ENCODE measurements at regions of chr1 and their contacts with region 1.

Region 1: GRCh38 chr1:167542109-167543032 is 11.2 kb downstream of the CREG1 start:
- DNase-seq: no peak
- ATAC-seq: no peak
- H3K4me3 Mint-ChIP-seq: no peak overlapping the region
- H3K27ac Mint-ChIP-seq: no peak overlapping the region
- H3K4me1 Mint-ChIP-seq: peaks cover 12% of the 10 kb centered on the region
- H3K27me3 Mint-ChIP-seq: no peaks in the 10 kb centered on the region
- CTCF ChIP-seq: no peak

Region 2: DNA sequence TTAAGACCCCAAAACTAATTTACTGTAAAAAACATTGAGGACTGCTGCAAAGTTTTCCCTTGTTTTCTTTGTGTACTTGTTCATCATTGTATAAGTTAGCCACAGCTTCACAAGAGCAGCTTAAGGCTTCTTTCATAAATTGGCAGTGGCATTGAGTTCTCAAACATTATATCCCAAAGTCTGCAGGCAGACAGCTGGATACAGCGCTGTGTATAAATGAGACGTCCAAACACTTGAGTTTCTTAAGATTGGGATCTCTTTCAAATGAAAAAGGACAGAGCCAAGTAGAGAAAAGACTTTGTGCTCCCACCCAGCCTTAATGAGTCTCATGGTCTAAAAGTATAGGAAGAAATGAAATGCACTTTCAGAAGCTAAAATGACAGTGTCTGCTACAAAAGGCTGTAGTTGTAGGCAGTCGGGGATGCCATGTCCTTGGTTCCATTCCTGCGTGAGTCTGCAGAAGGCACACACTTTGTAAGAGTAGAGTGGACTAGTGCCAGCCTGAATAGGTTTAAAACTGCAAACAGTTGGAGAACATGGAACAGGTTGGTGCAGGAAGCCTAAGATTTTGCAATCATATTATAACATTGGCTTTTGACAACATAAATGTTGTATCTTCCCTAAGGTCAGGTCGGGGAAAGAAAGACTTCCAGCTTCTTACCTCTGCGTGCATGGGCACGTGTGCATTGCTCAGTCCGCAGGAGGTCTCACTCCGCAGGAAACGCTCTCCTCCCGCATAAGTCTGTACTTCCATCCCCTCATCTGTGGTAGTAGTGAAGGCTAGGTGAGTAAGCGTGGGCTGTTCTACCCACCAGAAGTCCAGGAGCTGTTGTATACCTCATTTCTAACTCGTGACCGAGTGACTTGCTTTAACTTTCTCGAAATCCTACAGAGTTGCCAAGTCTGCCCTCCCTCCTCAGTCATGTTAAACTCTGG is 118.4 kb before region 1 on chr1:
- CTCF ChIA-PET with region 1: interaction called, 10 read pairs
- POLR2A ChIA-PET with region 1: no interaction called
- DNase-seq: no peak
- ATAC-seq: peak; percentile 14; the same call in 1 of the 2 replicates
- H3K4me3 Mint-ChIP-seq: no peak overlapping the region
- H3K27ac Mint-ChIP-seq: no peak overlapping the region; the same call in 1 of the 2 replicates
- H3K4me1 Mint-ChIP-seq: peaks cover 66% of the 10 kb centered on the region
- H3K27me3 Mint-ChIP-seq: no peaks in the 10 kb centered on the region; the same call in 1 of the 2 replicates
- CTCF ChIP-seq: no peak

Region 3: GRCh38 chr1:167454894-167455785 is 87.2 kb before region 1 on chr1:
- CTCF ChIA-PET with region 1: interaction called, 31 read pairs
- POLR2A ChIA-PET with region 1: no interaction called
- DNase-seq: peak; percentile 57
- ATAC-seq: peak; percentile 54
- H3K4me3 Mint-ChIP-seq: peak overlapping the region; percentile 64
- H3K27ac Mint-ChIP-seq: no peak overlapping the region
- H3K4me1 Mint-ChIP-seq: peaks cover 24% of the 10 kb centered on the region
- H3K27me3 Mint-ChIP-seq: peaks cover 46% of the 10 kb centered on the region
- CTCF ChIP-seq: no peak

Region 4: DNA sequence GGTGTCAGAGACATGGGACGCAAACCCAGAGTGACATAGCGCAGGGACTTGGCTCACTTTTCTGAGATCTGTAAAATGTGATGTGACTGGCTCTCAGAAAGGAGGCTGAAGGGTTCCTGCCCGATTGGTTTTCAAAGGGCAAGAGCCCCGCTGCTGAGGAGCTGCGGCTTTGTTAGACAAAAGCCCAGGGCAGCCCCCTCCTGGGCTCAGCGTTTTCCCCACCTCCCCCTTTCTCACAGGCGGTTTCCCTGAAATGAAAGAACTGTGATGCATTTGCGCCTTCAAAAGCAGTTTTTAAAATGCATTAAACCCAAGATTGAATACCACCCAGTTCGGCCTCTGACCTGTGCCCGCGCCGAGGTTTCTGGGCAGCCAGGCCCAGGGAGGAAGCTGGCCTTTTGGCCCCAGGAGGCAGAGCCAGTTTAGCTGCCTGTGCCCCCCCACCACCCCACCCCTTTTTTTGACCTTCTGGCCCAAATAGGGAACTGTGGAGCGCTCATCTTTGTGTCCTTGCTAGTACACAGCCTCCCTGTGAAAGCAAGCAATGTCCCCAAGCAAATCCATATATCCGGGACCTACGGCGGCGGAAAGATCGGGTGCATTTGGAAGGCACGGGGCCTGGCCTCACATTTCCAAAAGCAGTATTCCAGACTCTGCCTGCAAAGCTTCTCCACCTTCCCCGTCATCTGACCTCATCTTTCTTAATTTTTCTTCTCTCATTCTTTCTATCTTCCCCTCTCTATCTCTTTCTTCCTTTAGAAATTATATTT is 52.6 kb before region 1 on chr1:
- CTCF ChIA-PET with region 1: interaction called, 14 read pairs
- POLR2A ChIA-PET with region 1: no interaction called
- DNase-seq: peak; percentile 59
- ATAC-seq: peak; percentile 84
- H3K4me3 Mint-ChIP-seq: peak overlapping the region; percentile 49
- H3K27ac Mint-ChIP-seq: peak overlapping the region; percentile 91
- H3K4me1 Mint-ChIP-seq: peaks cover 56% of the 10 kb centered on the region
- H3K27me3 Mint-ChIP-seq: peaks cover 4% of the 10 kb centered on the region
- CTCF ChIP-seq: no peak

Region 5: GRCh38 chr1:167553136-167554027 is 11.0 kb after region 1 on chr1 and contains the start of gene CREG1:
- CTCF ChIA-PET with region 1: interaction called, 73 read pairs
- POLR2A ChIA-PET with region 1: interaction called, 5 read pairs
- DNase-seq: peak; percentile 96
- ATAC-seq: peak; percentile 98
- H3K4me3 Mint-ChIP-seq: peak within 1 kb of the TSS; percentile 87
- H3K27ac Mint-ChIP-seq: no peak within 1 kb of the TSS; the same call in 1 of the 2 replicates
- H3K4me1 Mint-ChIP-seq: peaks cover 26% of the 10 kb centered on the region; the same call in 1 of the 2 replicates
- H3K27me3 Mint-ChIP-seq: peaks cover 10% of the 10 kb centered on the region
- CTCF ChIP-seq: no peak
- total RNA-seq, gene CREG1: 21.0 to 24.7 TPM (median 21.7 TPM) in 3 replicates

Region 6: DNA sequence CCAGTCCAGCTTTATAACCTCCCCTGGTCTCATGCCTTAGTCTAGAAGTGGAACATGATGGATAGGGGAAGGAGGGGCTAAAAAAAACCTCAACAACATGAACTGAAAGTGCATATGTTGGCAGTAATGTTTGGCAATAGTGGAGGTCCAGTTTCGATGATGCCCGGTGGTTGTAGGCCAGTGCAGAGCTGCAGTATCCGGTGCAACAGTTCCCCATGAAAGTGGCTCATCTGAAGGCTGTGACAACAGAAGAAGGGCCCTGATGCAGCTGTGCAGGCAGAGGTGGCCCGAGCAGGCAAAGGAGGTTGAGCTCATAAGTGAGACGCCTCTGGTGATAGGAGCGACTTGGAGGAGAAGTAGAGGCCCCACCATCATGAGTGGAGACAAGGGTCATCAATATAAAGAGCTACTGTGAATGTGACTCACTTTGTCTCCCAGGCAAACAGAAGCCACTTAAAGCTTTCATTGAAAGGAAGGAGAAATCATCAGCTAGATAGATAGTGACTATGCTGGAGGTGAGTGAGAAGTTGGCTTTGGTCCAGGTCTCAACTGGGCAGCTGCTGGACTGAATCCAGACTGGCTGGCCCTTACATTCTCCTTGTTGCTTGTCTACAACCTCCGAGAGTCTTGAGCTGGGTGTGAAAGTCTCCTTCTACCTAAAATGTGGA is 21.3 kb after region 1 on chr1:
- CTCF ChIA-PET with region 1: interaction called, 14 read pairs
- POLR2A ChIA-PET with region 1: no interaction called
- DNase-seq: no peak
- ATAC-seq: no peak
- H3K4me3 Mint-ChIP-seq: no peak overlapping the region
- H3K27ac Mint-ChIP-seq: no peak overlapping the region
- H3K4me1 Mint-ChIP-seq: 0 out of 2 replicates have a peak, but pooled peaks cover 3% of the 10 kb centered on the region
- H3K27me3 Mint-ChIP-seq: no peaks in the 10 kb centered on the region
- CTCF ChIP-seq: no peak